ENCODE measurements at regions of chr2 and their contacts with region 1.

Region 1: GRCh38 chr2:107772353-107772752 is 54.3 kb upstream of the RGPD4 start:
- DNase-seq: no peak
- ATAC-seq: no peak
- H3K4me3 ChIP-seq: no peak overlapping the region
- H3K27ac ChIP-seq: no peak overlapping the region
- H3K4me1 ChIP-seq: no peaks in the 10 kb centered on the region
- H3K27me3 ChIP-seq: no peaks in the 10 kb centered on the region
- CTCF ChIP-seq: no peak
- EP300 ChIP-seq: no peak
- POLR2A ChIP-seq: no peak
- RAD21 ChIP-seq: no peak

Region 2: DNA sequence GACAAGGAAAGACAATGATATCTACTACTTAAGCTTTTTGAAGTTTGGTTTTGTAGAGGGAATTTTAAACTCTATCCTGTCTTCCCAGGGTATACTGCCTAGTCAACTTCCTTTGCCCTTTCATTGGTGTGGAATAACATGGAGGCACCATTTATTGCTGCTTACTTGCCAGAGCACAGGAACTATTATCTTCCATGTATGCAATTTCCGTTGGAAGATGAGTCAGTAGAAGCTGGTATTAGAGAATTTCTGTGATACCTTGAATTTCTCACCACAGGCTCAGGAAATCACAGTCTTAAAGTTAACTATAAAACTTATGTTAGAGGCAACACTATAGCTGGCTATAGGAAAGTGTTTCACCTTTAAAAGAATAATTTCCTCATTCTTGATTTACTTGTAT is 13.4 kb after region 1 on chr2:
- CTCF ChIA-PET with region 1: no interaction called
- POLR2A ChIA-PET with region 1: no interaction called
- RAD21 ChIA-PET with region 1: no interaction called
- SMC1A ChIA-PET with region 1: interaction called, 3 read pairs
- in situ Hi-C with region 1: no loop called
- intact Hi-C with region 1: loop called (anchors 2 kb)
- DNase-seq: no peak
- ATAC-seq: no peak
- H3K4me3 ChIP-seq: no peak overlapping the region
- H3K27ac ChIP-seq: no peak overlapping the region
- H3K4me1 ChIP-seq: no peaks in the 10 kb centered on the region
- H3K27me3 ChIP-seq: no peaks in the 10 kb centered on the region
- CTCF ChIP-seq: no peak
- EP300 ChIP-seq: no peak
- POLR2A ChIP-seq: no peak
- RAD21 ChIP-seq: no peak